Activated CD4-positive, alpha-beta memory T cell treated with anti-CD3 and anti-CD28 coated beads, Interleukin-2, amount 10 ng/mL, durations not matched to agents 7 days and 5 days (primary cell): ENCODE measurements at regions of chr19 and their contacts with region 1.

Region 1: GRCh38 chr19:19192078-19192882 is at the starts of genes BORCS8 and RFXANK:
- DNase-seq: peak; percentile 99
- H3K4me3 Mint-ChIP-seq: peak within 1 kb of the TSS; percentile 98
- H3K27ac Mint-ChIP-seq: peak within 1 kb of the TSS; percentile 99
- H3K4me1 Mint-ChIP-seq: peaks cover 48% of the 10 kb centered on the region
- H3K27me3 Mint-ChIP-seq: no peaks in the 10 kb centered on the region
- total RNA-seq, gene BORCS8: 28.5 to 29.0 TPM
- total RNA-seq, gene RFXANK: 100 to 102 TPM

Region 2: DNA sequence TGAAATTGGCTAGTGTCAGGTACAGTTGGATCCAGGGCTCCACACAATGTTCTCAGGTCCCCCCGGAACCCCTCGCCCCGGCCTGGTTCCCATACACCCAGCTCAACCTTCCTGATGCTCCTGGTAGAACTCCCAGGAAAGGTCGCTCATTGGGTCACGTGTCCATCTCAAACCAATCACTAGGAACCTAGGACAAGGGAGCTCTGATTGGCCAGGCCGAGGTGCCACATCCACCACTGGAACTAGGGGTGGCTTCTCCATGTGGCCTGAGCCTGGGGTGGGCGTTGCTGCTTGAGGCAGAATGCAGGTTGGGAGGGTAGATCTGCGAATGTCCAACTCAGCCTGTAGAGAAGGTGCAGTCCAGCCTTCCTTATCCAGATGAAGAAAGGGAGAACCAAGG is 15.3 kb before region 1 on chr19:
- CTCF ChIA-PET with region 1: interaction called, 19 read pairs
- POLR2A ChIA-PET with region 1: no interaction called
- DNase-seq: no peak
- H3K4me3 Mint-ChIP-seq: no peak overlapping the region
- H3K27ac Mint-ChIP-seq: no peak overlapping the region
- H3K4me1 Mint-ChIP-seq: no peaks in the 10 kb centered on the region
- H3K27me3 Mint-ChIP-seq: no peaks in the 10 kb centered on the region

Region 3: GRCh38 chr19:19203012-19203856 is 11.0 kb after region 1 on chr19 and contains the start of gene NR2C2AP:
- CTCF ChIA-PET with region 1: interaction called, 8 read pairs
- POLR2A ChIA-PET with region 1: interaction called, 102 read pairs
- DNase-seq: peak; percentile 93
- H3K4me3 Mint-ChIP-seq: peak within 1 kb of the TSS; percentile 90
- H3K27ac Mint-ChIP-seq: peak within 1 kb of the TSS; percentile 86
- H3K4me1 Mint-ChIP-seq: peaks cover 57% of the 10 kb centered on the region
- H3K27me3 Mint-ChIP-seq: peaks cover 1% of the 10 kb centered on the region
- total RNA-seq, gene NR2C2AP: 25.8 to 25.9 TPM

Region 4: DNA sequence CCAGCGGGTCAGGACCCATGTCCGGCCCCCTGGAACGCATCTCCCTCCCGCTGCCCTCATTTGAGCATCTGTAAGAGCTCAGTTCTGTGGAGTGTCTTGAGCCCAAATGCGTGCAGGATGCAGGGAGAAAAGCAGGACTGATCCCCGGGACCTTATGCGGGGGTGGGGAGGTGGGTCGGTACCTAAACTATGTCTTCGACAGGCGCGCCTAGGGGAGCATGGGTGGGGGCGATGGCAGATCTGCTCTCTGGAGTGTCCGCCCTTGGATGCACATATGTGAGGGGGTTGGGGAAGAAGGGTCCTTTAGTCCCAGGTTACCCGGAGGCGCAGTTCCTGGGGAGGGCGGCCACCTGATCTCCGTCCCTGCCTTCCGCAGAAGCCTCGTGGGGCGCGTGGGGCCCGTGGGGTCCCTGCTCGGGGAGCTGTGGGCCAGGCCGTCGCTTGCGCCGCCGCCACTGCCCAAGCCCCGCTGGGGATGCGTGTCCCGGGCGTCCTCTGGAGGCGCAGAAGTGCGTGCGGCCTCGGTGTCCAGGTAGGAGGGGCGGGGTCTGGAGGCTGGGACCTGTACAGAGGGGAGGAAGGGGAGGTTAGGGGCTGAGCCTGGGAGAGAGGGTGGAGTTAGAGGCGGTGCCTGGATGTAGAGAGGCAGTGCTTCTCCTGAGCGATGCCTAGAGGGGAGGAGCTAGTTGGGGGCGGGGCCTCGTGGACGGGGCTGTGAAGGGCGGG is 348.6 kb after region 1 on chr19:
- CTCF ChIA-PET with region 1: no interaction called
- POLR2A ChIA-PET with region 1: no interaction called
- DNase-seq: peak; percentile 78
- H3K4me3 Mint-ChIP-seq: peak overlapping the region; percentile 43
- H3K27ac Mint-ChIP-seq: no peak overlapping the region
- H3K4me1 Mint-ChIP-seq: peaks cover 27% of the 10 kb centered on the region
- H3K27me3 Mint-ChIP-seq: peaks cover 22% of the 10 kb centered on the region